Spleen (tissue), 13 donors: ENCODE measurements at regions of chr17 and their contacts with region 1.

Region 1: DNA sequence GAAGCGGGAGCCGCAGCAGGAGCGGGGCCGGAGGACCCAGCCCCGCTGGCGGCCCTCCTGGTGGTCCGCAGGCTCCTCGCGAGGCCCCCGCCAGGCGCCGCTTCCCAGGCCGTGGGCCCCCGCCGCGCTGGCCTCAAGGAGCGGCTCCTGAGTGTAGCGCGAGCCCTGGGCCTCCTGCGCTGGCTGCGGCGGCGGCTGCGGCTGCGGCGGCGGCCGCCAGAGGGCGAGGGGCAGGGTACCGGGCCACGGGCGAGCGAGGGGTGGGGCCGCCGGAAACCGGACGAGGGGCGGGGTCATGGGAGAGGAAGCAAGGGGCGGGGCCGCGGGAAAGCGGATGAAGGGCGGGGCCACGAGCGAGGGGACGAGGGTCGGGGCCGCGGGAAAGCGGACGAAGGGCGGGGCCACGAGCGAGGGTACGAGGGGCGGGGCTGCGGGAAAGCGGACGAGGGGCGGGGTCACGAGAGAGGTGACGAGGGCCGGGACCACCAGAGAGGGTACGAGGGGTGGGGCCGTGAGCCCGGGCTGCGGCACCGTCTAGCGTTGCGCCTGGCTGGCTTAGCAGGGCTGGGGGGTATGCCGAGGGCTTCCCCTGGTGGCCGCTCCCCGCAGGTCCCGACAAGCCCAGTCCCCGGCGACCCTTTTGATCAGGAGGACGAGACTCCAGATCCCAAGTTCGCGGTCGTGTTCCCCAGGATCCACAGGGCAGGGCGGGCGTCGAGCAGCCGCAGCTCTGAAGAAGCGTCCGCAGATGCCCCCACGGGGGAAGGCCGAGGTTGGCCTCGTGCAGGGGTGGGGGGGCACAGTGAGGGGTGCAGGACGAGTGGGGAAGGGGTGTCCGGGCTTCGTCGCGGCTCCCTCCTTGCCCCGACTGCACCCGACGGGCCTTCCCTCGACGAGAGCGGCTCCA is 1.7 kb downstream of the MYO15B start:
- DNase-seq: peak; percentile 100
- H3K4me3 ChIP-seq: peak overlapping the region; percentile 52 to 91 (median 70)
- H3K27ac ChIP-seq: peak overlapping the region; percentile 93 to 98 (median 96)
- H3K4me1 ChIP-seq: peaks cover 6 to 44% (median 29%) of the 10 kb centered on the region in 6 donors
- H3K27me3 ChIP-seq: peaks cover 0 to 11% (median 0%) of the 10 kb centered on the region in 7 donors
- CTCF ChIP-seq: peak in 10 of 11 experiments; percentile 23 to 93 (median 85)
- POLR2A ChIP-seq: no peak

Region 2: GRCh38 chr17:75515496-75516254 is 73.6 kb before region 1 on chr17 and contains the start of gene CASKIN2:
- intact Hi-C with region 1: loop called (anchors 5 kb)
- DNase-seq: peak; percentile 95
- H3K4me3 ChIP-seq: peak within 1 kb of the TSS; percentile 70 to 99 (median 94)
- H3K27ac ChIP-seq: peak within 1 kb of the TSS; percentile 60 to 90 (median 84)
- H3K4me1 ChIP-seq: peaks cover 8 to 85% (median 55%) of the 10 kb centered on the region in 6 donors
- H3K27me3 ChIP-seq: peaks cover 0 to 18% (median 0%) of the 10 kb centered on the region in 7 donors
- CTCF ChIP-seq: peak; percentile 88 to 98 (median 96)
- POLR2A ChIP-seq: no peak
- total RNA-seq, gene CASKIN2: 33.5 to 135 (median 51.1) TPM

Region 3: DNA sequence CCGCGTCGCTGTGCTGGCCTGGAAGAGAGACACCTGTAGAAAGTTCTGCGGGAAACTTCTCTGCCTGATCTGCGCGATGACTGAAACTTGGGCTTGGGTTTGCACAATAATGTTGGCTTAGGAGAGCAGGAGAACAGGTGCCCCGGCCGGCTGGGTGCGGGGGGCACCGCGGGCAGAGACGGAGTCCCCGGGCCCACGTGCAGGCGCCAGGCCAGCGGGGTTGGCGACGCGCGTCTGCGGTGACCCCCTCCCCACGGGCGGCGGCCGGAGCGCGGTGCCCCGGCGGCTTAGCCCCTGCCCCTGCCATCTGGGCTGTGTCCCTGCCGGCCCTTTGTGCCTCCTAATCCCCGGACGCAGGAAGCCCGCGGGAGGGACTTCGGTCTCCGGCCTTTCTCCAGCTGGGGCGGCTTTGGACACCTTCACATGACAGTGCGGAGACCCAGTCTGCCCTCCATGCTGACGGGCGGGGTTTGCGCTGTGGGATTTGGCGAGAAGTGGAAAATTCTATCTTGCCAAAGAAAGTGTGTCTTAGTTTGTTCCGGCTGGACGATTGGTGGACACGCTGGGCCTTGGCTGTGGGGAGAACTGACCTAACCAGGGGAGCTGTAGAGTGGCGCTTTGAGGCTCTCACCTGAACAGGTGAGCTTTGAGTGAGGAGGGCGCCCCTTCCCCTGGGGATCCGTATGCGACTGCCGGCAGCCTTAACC is 63.1 kb before region 1 on chr17:
- intact Hi-C with region 1: no loop called
- DNase-seq: peak; percentile 85
- H3K4me3 ChIP-seq: peak overlapping the region; percentile 68 to 92 (median 82)
- H3K27ac ChIP-seq: peak overlapping the region; percentile 36 to 92 (median 84)
- H3K4me1 ChIP-seq: peaks cover 7 to 52% (median 35%) of the 10 kb centered on the region in 6 donors
- H3K27me3 ChIP-seq: peaks cover 0 to 15% (median 0%) of the 10 kb centered on the region in 7 donors
- CTCF ChIP-seq: no peak
- POLR2A ChIP-seq: no peak

Region 4: GRCh38 chr17:75827252-75828115 is 238.2 kb after region 1 on chr17:
- intact Hi-C with region 1: no loop called
- DNase-seq: peak; percentile 86
- H3K4me3 ChIP-seq: peak overlapping the region in 4 of 8 donors; percentile 20 to 51 (median 21)
- H3K27ac ChIP-seq: peak overlapping the region; percentile 62 to 84 (median 74)
- H3K4me1 ChIP-seq: peaks cover 19 to 87% (median 46%) of the 10 kb centered on the region in 6 donors
- H3K27me3 ChIP-seq: no peaks in the 10 kb centered on the region
- CTCF ChIP-seq: peak; percentile 62 to 87 (median 78)
- POLR2A ChIP-seq: no peak